ENCODE measurements at regions of chr10 and their contacts with region 1.

Region 1: DNA sequence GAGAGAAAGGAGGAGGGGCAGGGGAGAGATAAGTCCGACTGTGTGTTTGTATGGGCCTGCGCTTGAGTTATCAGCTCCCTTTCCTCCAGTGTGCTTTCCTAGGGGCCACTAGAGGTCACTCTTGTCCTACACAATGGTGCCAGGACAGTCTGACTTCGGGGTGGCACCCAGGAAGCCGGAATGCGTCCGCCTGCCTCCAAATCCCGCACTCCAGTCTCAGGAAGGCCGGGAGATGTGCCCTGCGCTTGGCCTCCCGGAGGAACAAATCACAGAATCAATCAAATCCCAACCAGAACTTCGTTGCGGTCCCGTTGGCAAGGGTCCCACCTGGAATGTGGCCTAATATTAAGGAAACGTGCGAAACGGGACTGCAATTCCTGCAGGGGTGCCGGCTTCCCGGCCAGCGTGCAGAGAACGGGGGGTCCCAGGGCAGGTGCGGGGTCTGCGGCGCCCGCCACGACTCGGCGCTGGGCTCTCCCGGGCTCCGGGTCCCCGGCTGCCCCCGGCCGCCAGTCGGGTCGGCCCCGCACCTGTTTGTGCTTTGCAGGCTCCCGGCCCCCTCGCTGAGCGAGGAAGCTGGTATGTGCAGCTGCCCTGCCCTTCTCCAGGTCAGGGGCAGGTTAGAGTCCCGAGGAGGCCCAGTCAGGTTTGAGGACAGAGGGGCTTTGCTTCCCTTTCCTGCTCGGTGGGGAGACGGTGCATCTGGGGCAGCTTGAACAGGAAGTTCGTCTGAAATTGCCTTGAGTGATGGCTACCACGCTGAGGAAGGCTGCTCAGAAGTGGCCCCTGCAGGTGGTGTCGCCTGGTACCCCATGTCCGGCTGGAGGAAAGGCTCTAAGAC is 21.0 kb upstream of the HPS1 start:
- DNase-seq: peak; percentile 32 to 75 (median 65)
- ATAC-seq: peak; percentile 96
- H3K4me3 ChIP-seq: peak overlapping the region; percentile 92
- H3K4me3 Mint-ChIP-seq: peak overlapping the region; percentile 86 to 100 (median 96)
- H3K27ac ChIP-seq: peak overlapping the region; percentile 45
- H3K27ac Mint-ChIP-seq: peak overlapping the region in 8 of 9 donors; percentile 67 to 93 (median 88)
- H3K4me1 ChIP-seq: no peaks in the 10 kb centered on the region
- H3K4me1 Mint-ChIP-seq: peaks cover 0 to 12% (median 6%) of the 10 kb centered on the region in 7 donors
- H3K27me3 ChIP-seq: no peaks in the 10 kb centered on the region
- H3K27me3 Mint-ChIP-seq: peaks cover 0 to 36% (median 6%) of the 10 kb centered on the region in 5 donors

Region 2: DNA sequence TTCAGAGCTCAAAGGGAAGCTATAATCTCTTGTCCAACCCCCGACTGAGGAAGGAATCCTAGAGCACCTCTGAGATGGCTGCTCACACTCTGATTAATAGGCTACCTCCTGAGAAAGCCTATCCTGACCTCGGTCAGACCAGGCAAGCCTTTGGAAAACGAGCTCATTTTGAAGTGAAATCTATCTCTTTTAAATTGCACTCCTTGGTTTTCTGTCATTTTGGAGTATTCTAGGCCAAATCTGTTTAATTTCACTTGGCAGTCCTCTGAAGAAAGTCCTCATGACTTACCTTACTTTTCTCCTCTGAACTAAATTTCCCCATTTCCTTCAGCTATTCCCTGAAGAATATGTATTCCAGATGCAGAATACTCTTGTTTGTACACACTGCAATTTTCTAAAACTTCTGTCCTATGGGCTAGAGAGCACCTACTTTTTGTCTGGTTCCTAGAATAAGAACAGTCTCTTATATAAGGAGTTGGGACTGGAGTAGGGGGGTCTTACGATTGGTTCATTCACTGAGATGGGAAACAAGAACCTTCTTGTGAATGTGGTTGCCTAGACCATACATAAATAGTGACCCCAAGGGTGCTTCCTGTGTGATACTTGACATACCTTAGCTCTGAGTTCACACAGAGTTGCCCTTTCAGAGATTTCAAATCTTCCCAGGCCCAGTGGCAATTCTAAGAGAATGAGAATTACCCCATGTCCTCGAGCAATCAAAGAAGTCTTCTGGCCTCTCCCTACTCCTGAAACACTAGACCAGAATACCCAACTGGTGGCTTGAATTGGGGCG is 10.9 kb after region 1 on chr10:
- CTCF ChIA-PET with region 1: interaction called, 14 read pairs
- POLR2A ChIA-PET with region 1: no interaction called
- intact Hi-C with region 1: no loop called
- DNase-seq: no peak
- ATAC-seq: no peak
- H3K4me3 ChIP-seq: no peak overlapping the region
- H3K4me3 Mint-ChIP-seq: no peak overlapping the region
- H3K27ac ChIP-seq: no peak overlapping the region
- H3K27ac Mint-ChIP-seq: no peak overlapping the region
- H3K4me1 ChIP-seq: peaks cover 0 to 4% of the 10 kb centered on the region in 2 donors
- H3K4me1 Mint-ChIP-seq: peaks cover 0 to 7% (median 0%) of the 10 kb centered on the region in 7 donors
- H3K27me3 ChIP-seq: no peaks in the 10 kb centered on the region
- H3K27me3 Mint-ChIP-seq: peaks cover 0 to 11% (median 0%) of the 10 kb centered on the region in 5 donors

Region 3: GRCh38 chr10:99248824-99249223 is 781.1 kb after region 1 on chr10:
- CTCF ChIA-PET with region 1: interaction called, 32 read pairs
- POLR2A ChIA-PET with region 1: no interaction called
- intact Hi-C with region 1: no loop called
- DNase-seq: no peak
- ATAC-seq: no peak
- H3K4me3 ChIP-seq: no peak overlapping the region
- H3K4me3 Mint-ChIP-seq: no peak overlapping the region
- H3K27ac ChIP-seq: no peak overlapping the region
- H3K27ac Mint-ChIP-seq: no peak overlapping the region
- H3K4me1 ChIP-seq: no peaks in the 10 kb centered on the region
- H3K4me1 Mint-ChIP-seq: no peaks in the 10 kb centered on the region
- H3K27me3 ChIP-seq: no peaks in the 10 kb centered on the region
- H3K27me3 Mint-ChIP-seq: peaks cover 6 to 53% (median 34%) of the 10 kb centered on the region in 5 donors

Region 4: GRCh38 chr10:99395750-99396445 is 928.2 kb after region 1 on chr10:
- CTCF ChIA-PET with region 1: no interaction called
- POLR2A ChIA-PET with region 1: no interaction called
- intact Hi-C with region 1: loop called in 1 of 2 experiments (anchors 1 kb)
- DNase-seq: no peak
- ATAC-seq: no peak
- H3K4me3 ChIP-seq: no peak overlapping the region
- H3K4me3 Mint-ChIP-seq: no peak overlapping the region
- H3K27ac ChIP-seq: peak overlapping the region; percentile 39
- H3K27ac Mint-ChIP-seq: peak overlapping the region in 7 of 9 donors; percentile 7 to 74 (median 60)
- H3K4me1 ChIP-seq: no peaks in the 10 kb centered on the region
- H3K4me1 Mint-ChIP-seq: peaks cover 0 to 15% (median 9%) of the 10 kb centered on the region in 7 donors
- H3K27me3 ChIP-seq: no peaks in the 10 kb centered on the region
- H3K27me3 Mint-ChIP-seq: no peaks in the 10 kb centered on the region

Region 5: DNA sequence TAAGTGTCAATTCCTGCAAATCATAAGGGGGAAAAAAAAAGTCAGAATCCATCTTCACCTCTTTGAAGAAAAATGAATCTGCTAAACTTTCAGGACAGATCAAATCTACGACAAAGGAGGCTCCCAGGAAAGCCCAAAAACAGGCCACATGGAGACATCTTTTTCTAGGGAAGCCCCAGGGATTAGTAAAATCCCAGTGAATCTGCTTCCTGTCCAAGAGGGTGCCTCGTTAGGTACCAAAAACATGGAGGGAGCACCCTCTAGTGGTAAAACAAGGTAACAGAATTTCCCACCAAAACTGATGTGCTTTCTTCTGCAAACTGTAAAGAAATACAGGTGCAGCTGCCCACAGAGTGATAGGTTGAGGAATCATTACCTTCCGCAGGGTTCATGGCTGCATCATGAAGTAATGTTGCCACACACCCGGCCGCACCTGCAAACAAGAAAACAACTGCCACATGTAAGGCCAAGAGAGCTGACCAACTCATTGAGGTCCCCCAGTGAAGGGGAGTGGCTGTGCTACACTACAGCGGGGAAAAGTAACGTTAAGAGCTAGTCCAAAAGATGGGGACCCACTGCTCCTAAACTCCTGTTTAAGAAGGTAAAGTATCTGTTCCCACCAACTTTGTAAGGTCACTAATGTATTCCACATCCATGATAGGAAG is 1144.6 kb after region 1 on chr10:
- CTCF ChIA-PET with region 1: no interaction called
- POLR2A ChIA-PET with region 1: no interaction called
- intact Hi-C with region 1: loop called in 1 of 2 experiments (anchors 1 kb)
- DNase-seq: peak in 8 of 9 donors; percentile 24 to 60 (median 48)
- ATAC-seq: peak; percentile 81
- H3K4me3 ChIP-seq: no peak overlapping the region
- H3K4me3 Mint-ChIP-seq: no peak overlapping the region
- H3K27ac ChIP-seq: peak overlapping the region; percentile 14
- H3K27ac Mint-ChIP-seq: peak overlapping the region in 8 of 9 donors; percentile 34 to 83 (median 64)
- H3K4me1 ChIP-seq: peaks cover 3 to 7% of the 10 kb centered on the region in 2 donors
- H3K4me1 Mint-ChIP-seq: peaks cover 14 to 33% (median 27%) of the 10 kb centered on the region in 7 donors
- H3K27me3 ChIP-seq: no peaks in the 10 kb centered on the region
- H3K27me3 Mint-ChIP-seq: no peaks in the 10 kb centered on the region

Measured in naive thymus-derived CD4-positive, alpha-beta T cell (primary cell).